CD8-positive, alpha-beta T cell (primary cell): ENCODE measurements at regions of chr19 and their contacts with region 1.

Region 1: GRCh38 chr19:49766007-49766937 is 529 bp upstream of the AP2A1 start:
- DNase-seq: peak; percentile 97 to 100 (median 99)
- ATAC-seq: peak; percentile 87
- H3K4me3 ChIP-seq: peak overlapping the region; percentile 62 to 76
- H3K4me3 Mint-ChIP-seq: peak overlapping the region; percentile 82
- H3K27ac ChIP-seq: peak overlapping the region; percentile 66 to 87
- H3K27ac Mint-ChIP-seq: peak overlapping the region; percentile 93
- H3K4me1 ChIP-seq: peaks cover 24% of the 10 kb centered on the region
- H3K4me1 Mint-ChIP-seq: peaks cover 38% of the 10 kb centered on the region
- H3K27me3 ChIP-seq: no peaks in the 10 kb centered on the region
- H3K27me3 Mint-ChIP-seq: no peaks in the 10 kb centered on the region
- CTCF ChIP-seq: no peak

Region 2: DNA sequence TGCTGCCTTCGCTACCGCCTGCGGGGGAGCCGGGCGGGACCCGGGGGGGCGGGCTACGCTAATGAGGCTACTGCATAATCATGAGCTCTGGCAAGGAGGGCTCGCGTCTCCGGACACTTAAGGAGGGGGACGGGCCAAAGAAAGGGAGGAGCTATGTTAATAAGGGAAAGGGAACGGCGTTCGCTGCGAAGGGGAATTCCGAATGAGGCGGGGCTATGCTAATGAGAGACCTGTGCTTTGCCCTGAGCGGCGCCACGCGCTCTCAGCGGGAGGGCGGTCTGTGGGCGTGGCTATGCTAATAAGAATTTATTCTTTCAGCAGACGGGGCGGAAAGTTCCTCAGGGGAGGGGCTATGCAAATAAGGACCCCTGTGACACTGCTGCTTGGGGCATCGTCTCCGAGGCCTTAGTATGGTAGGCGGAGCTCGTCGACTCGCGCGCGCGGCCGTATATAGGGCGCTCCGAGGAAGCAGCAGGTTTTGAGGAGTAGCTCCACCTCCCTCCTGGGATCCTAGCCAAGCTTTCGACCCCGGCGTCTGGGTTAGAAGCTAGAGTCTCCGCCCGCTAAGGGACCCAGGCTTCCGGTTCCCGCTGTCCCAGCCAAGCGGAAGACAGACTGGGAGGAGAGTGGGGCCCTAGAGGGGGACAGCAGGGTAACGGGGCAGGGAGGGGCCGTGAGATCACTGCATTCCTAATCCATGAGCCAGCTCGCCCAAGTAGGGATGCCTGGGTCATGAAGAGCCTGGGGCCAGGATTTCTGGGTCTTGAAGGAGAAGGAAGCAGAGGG is 126.0 kb before region 1 on chr19 and contains the start of gene RRAS:
- CTCF ChIA-PET with region 1: no interaction called
- POLR2A ChIA-PET with region 1: interaction called, 5 read pairs
- intact Hi-C with region 1: loop called in 1 of 2 experiments (anchors 1 kb)
- DNase-seq: peak; percentile 98 to 100 (median 99)
- ATAC-seq: peak; percentile 66
- H3K4me3 ChIP-seq: peak within 1 kb of the TSS; percentile 64 to 75
- H3K4me3 Mint-ChIP-seq: peak within 1 kb of the TSS; percentile 95
- H3K27ac ChIP-seq: peak within 1 kb of the TSS; percentile 64 to 98
- H3K27ac Mint-ChIP-seq: peak within 1 kb of the TSS; percentile 96
- H3K4me1 ChIP-seq: peaks cover 51% of the 10 kb centered on the region
- H3K4me1 Mint-ChIP-seq: peaks cover 58% of the 10 kb centered on the region
- H3K27me3 ChIP-seq: no peaks in the 10 kb centered on the region
- H3K27me3 Mint-ChIP-seq: no peaks in the 10 kb centered on the region
- CTCF ChIP-seq: no peak
- total RNA-seq, gene RRAS: 3.6 to 4.9 TPM

Region 3: GRCh38 chr19:49718511-49718910 is 47.8 kb before region 1 on chr19:
- CTCF ChIA-PET with region 1: interaction called, 3 read pairs
- POLR2A ChIA-PET with region 1: interaction called, 14 read pairs
- intact Hi-C with region 1: loop called (anchors 1 kb)
- DNase-seq: no peak
- ATAC-seq: no peak
- H3K4me3 ChIP-seq: no peak overlapping the region
- H3K4me3 Mint-ChIP-seq: peak overlapping the region; percentile 92
- H3K27ac ChIP-seq: no peak overlapping the region
- H3K27ac Mint-ChIP-seq: peak overlapping the region; percentile 14
- H3K4me1 ChIP-seq: peaks cover 4% of the 10 kb centered on the region
- H3K4me1 Mint-ChIP-seq: peaks cover 14% of the 10 kb centered on the region
- H3K27me3 ChIP-seq: no peaks in the 10 kb centered on the region
- H3K27me3 Mint-ChIP-seq: no peaks in the 10 kb centered on the region
- CTCF ChIP-seq: no peak

Region 4: GRCh38 chr19:49869441-49870176 is 103.3 kb after region 1 on chr19:
- CTCF ChIA-PET with region 1: no interaction called
- POLR2A ChIA-PET with region 1: interaction called, 3 read pairs
- intact Hi-C with region 1: loop called (anchors 1 kb)
- DNase-seq: peak; percentile 81 to 98 (median 89)
- ATAC-seq: peak; percentile 75
- H3K4me3 ChIP-seq: peak overlapping the region; percentile 73 to 85
- H3K4me3 Mint-ChIP-seq: no peak overlapping the region
- H3K27ac ChIP-seq: peak overlapping the region; percentile 64 to 96
- H3K27ac Mint-ChIP-seq: no peak overlapping the region
- H3K4me1 ChIP-seq: peaks cover 36% of the 10 kb centered on the region
- H3K4me1 Mint-ChIP-seq: peaks cover 41% of the 10 kb centered on the region
- H3K27me3 ChIP-seq: no peaks in the 10 kb centered on the region
- H3K27me3 Mint-ChIP-seq: no peaks in the 10 kb centered on the region
- CTCF ChIP-seq: no peak